Naive thymus-derived CD4-positive, alpha-beta T cell (primary cell): ENCODE measurements at regions of chr12 and their contacts with region 1.

Region 1: GRCh38 chr12:12032851-12033588 is 37.7 kb upstream of the BCL2L14 start:
- DNase-seq: peak; percentile 46 to 79 (median 65)
- ATAC-seq: peak; percentile 82
- H3K4me3 ChIP-seq: peak overlapping the region; percentile 63
- H3K4me3 Mint-ChIP-seq: peak overlapping the region; percentile 75 to 87 (median 82)
- H3K27ac ChIP-seq: no peak overlapping the region
- H3K27ac Mint-ChIP-seq: peak overlapping the region; percentile 18 to 91 (median 72)
- H3K4me1 ChIP-seq: peaks cover 9 to 13% of the 10 kb centered on the region in 2 donors
- H3K4me1 Mint-ChIP-seq: peaks cover 14 to 50% (median 17%) of the 10 kb centered on the region in 7 donors
- H3K27me3 ChIP-seq: no peaks in the 10 kb centered on the region
- H3K27me3 Mint-ChIP-seq: no peaks in the 10 kb centered on the region

Region 2: DNA sequence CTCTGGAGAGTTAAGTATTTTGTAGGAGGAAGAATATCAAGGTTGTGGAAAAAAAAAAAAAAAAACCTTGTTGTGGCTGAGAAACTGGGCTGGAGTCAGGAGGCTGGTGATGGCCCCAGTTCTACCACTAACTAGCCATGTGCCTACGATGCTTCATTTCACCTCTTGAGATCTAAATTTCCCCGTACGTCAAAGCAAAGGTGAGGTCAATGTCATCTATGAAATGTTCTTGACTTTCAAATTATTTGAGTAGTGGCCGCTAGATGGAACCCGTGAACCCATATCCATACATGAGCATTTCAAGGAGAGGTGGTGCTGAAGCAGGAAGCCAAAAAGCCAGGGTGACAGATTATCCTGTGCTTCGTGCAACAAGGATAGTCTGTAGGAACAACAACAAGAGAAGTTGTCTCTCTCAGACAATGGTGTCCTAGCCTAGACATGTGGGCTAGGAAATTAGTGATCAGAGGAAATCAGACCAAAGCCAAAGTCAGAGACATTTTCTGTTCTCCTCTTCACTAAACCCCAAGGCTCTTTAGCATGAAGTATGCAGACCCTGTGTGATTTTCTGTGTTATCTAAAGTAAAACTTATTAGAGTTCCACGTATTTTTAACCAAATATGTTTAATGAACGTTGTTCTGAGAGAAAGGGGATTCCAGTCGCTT is 479.0 kb before region 1 on chr12:
- CTCF ChIA-PET with region 1: interaction called, 6 read pairs
- POLR2A ChIA-PET with region 1: interaction called, 3 read pairs
- intact Hi-C with region 1: loop called (anchors 1 kb)
- DNase-seq: peak in 7 of 9 donors; percentile 41 to 66 (median 58)
- ATAC-seq: peak; percentile 81
- H3K4me3 ChIP-seq: no peak overlapping the region
- H3K4me3 Mint-ChIP-seq: peak overlapping the region in 8 of 10 donors; percentile 12 to 71 (median 36)
- H3K27ac ChIP-seq: no peak overlapping the region
- H3K27ac Mint-ChIP-seq: peak overlapping the region in 8 of 9 donors; percentile 38 to 94 (median 58)
- H3K4me1 ChIP-seq: peaks cover 0 to 15% of the 10 kb centered on the region in 2 donors
- H3K4me1 Mint-ChIP-seq: peaks cover 11 to 47% (median 32%) of the 10 kb centered on the region in 7 donors
- H3K27me3 ChIP-seq: no peaks in the 10 kb centered on the region
- H3K27me3 Mint-ChIP-seq: peaks cover 0 to 26% (median 0%) of the 10 kb centered on the region in 5 donors

Region 3: DNA sequence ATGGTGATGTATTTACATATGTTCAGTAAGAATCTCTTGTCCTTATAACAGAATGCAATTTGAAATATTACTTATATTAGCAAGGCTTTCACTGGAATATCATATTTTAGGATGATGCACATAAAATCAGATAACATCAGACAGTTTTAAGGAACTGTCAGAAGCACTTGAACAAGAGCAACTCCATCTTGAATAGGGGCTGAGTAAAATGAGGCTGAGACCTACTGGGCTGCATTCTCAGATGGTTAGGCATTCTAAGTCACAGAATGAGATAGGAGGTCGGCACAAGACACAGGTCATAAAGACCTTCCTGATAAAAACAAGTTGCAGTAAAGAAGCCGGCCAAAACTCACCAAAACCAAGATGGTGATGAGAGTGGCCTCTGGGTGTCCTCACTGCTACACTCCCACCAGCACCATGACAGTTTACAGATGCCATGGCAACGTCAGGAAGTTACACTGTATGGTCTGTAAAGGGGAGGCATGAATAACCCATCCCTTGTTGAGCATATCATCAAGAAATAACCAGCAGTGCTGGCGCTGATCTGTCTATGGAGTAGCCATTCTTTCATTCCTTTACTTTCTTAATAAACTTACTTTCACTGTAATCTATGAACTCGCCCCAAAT is 411.1 kb before region 1 on chr12:
- CTCF ChIA-PET with region 1: interaction called, 31 read pairs
- POLR2A ChIA-PET with region 1: interaction called, 4 read pairs
- intact Hi-C with region 1: loop called (anchors 1 kb)
- DNase-seq: peak in 6 of 9 donors; percentile 8 to 43 (median 28)
- ATAC-seq: no peak
- H3K4me3 ChIP-seq: no peak overlapping the region
- H3K4me3 Mint-ChIP-seq: no peak overlapping the region
- H3K27ac ChIP-seq: no peak overlapping the region
- H3K27ac Mint-ChIP-seq: peak overlapping the region in 1 of 9 donors; percentile 26
- H3K4me1 ChIP-seq: no peaks in the 10 kb centered on the region
- H3K4me1 Mint-ChIP-seq: peaks cover 0 to 10% (median 0%) of the 10 kb centered on the region in 7 donors
- H3K27me3 ChIP-seq: no peaks in the 10 kb centered on the region
- H3K27me3 Mint-ChIP-seq: no peaks in the 10 kb centered on the region

Region 4: DNA sequence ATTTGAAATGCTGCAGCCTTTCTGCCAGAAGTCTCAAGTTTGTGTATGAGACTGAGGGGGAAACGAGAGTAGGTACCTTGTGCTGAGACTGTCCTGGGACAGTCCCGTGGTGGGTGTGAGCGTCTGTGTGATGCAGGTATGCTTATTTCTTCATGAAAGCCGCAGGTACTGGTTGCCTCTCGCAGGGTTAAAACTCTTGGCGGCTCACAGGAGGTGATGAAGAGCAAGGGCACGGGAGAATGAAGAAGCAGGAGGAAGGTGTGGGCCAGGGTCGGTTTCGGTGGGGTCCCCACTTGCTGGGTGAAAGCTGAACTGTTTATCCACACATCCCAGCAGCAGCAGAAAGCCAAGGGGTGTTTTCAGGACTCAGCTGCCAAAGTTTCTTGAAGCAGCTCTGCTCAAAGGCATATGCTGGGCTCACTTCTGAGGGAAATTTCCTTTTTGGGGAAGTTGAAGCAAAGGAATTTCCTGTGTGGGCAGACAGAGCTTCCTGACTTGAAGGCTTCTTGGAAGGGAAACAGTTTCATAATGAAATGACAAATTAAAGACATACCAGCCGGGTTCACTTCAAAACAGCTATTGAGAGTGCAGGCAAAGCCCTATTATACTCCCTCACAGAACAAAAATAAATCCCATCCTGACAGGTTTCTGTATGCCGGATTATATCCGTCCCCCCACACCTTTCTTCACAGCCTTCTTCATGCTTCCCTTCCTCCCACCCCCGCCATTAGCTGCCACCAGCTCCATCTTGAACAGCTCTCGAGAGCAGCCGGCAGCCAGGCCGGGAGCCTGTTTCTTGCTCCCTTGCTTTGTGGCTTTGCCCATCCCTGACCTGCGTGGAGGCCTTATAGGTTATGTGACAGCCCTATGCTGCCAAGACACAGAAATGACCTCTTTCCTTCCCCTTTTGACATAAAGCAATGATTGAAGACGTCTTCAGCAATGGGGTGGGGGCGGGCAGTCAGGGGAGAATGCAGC is 266.9 kb before region 1 on chr12:
- CTCF ChIA-PET with region 1: interaction called, 3 read pairs
- POLR2A ChIA-PET with region 1: no interaction called
- intact Hi-C with region 1: loop called in 1 of 2 experiments (anchors 5 kb)
- DNase-seq: peak in 4 of 9 donors; percentile 13 to 69 (median 32)
- ATAC-seq: peak; percentile 77
- H3K4me3 ChIP-seq: peak overlapping the region; percentile 12
- H3K4me3 Mint-ChIP-seq: peak overlapping the region; percentile 51 to 93 (median 70)
- H3K27ac ChIP-seq: peak overlapping the region; percentile 36
- H3K27ac Mint-ChIP-seq: peak overlapping the region; percentile 30 to 87 (median 74)
- H3K4me1 ChIP-seq: peaks cover 24 to 33% of the 10 kb centered on the region in 2 donors
- H3K4me1 Mint-ChIP-seq: peaks cover 57 to 96% (median 81%) of the 10 kb centered on the region in 7 donors
- H3K27me3 ChIP-seq: no peaks in the 10 kb centered on the region
- H3K27me3 Mint-ChIP-seq: no peaks in the 10 kb centered on the region

Region 5: DNA sequence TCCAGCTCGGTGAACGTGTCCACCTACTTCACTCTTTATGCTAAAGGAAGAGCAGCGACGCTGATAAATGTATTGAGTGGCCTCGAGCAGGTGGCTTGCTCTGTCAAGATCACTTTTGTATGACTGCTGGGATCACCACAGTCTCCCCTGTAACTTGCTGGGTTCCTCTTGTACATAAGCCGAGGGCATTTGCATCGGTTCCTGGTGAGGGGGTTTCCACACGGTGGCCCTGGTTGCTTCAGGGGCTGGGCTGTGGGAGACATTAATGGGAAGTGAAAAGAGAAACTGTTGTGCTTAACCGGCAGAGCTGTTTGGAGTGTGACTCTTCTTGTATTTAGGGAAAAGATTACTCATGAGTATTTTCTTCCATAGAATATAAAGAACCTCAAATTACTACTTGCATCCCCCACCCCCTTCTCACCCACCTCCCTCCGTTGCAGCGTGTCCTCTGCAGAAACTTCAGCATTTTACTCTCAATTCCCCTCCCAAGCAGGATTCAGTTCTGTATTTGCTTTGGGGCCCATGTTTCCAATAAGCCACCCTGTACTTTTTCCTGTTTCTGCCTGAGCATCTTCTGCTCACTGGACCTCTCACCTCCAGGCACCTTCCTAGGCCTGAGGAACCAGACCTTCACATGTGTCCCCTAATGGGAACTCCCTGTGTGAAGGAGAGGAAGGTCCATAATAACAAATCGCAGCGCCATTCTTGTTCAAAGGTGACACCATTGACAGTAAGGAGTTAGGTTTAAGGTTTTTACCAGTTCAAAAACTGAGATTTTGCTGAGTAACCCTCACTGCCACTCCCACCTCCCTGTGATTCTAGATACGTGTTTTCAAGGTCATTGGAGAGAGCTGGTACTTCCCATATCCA is 196.5 kb before region 1 on chr12:
- CTCF ChIA-PET with region 1: interaction called, 3 read pairs
- POLR2A ChIA-PET with region 1: no interaction called
- intact Hi-C with region 1: loop called in 1 of 2 experiments (anchors 5 kb)
- DNase-seq: peak in 1 of 9 donors; percentile 76
- ATAC-seq: peak; percentile 79
- H3K4me3 ChIP-seq: no peak overlapping the region
- H3K4me3 Mint-ChIP-seq: peak overlapping the region in 1 of 10 donors; percentile 79
- H3K27ac ChIP-seq: no peak overlapping the region
- H3K27ac Mint-ChIP-seq: peak overlapping the region in 3 of 9 donors; percentile 12 to 81 (median 61)
- H3K4me1 ChIP-seq: no peaks in the 10 kb centered on the region
- H3K4me1 Mint-ChIP-seq: peaks cover 8 to 54% (median 27%) of the 10 kb centered on the region in 7 donors
- H3K27me3 ChIP-seq: no peaks in the 10 kb centered on the region
- H3K27me3 Mint-ChIP-seq: no peaks in the 10 kb centered on the region

Region 6: GRCh38 chr12:11901701-11902524 is 131.1 kb before region 1 on chr12:
- CTCF ChIA-PET with region 1: interaction called, 4 read pairs
- POLR2A ChIA-PET with region 1: no interaction called
- intact Hi-C with region 1: loop called in 1 of 2 experiments (anchors 5 kb)
- DNase-seq: peak in 1 of 9 donors; percentile 79
- ATAC-seq: no peak
- H3K4me3 ChIP-seq: no peak overlapping the region
- H3K4me3 Mint-ChIP-seq: peak overlapping the region in 8 of 10 donors; percentile 10 to 71 (median 36)
- H3K27ac ChIP-seq: no peak overlapping the region
- H3K27ac Mint-ChIP-seq: peak overlapping the region in 3 of 9 donors; percentile 29 to 73 (median 71)
- H3K4me1 ChIP-seq: peaks cover 0 to 6% of the 10 kb centered on the region in 2 donors
- H3K4me1 Mint-ChIP-seq: peaks cover 17 to 60% (median 44%) of the 10 kb centered on the region in 7 donors
- H3K27me3 ChIP-seq: no peaks in the 10 kb centered on the region
- H3K27me3 Mint-ChIP-seq: no peaks in the 10 kb centered on the region

Region 7: GRCh38 chr12:11970155-11970520 is 62.9 kb before region 1 on chr12:
- CTCF ChIA-PET with region 1: no interaction called
- POLR2A ChIA-PET with region 1: no interaction called
- intact Hi-C with region 1: no loop called
- DNase-seq: no peak
- ATAC-seq: no peak
- H3K4me3 ChIP-seq: no peak overlapping the region
- H3K4me3 Mint-ChIP-seq: no peak overlapping the region
- H3K27ac ChIP-seq: no peak overlapping the region
- H3K27ac Mint-ChIP-seq: peak overlapping the region in 4 of 9 donors; percentile 0 to 56 (median 26)
- H3K4me1 ChIP-seq: no peaks in the 10 kb centered on the region
- H3K4me1 Mint-ChIP-seq: peaks cover 0 to 24% (median 6%) of the 10 kb centered on the region in 7 donors
- H3K27me3 ChIP-seq: no peaks in the 10 kb centered on the region
- H3K27me3 Mint-ChIP-seq: peaks cover 0 to 2% (median 0%) of the 10 kb centered on the region in 5 donors

Region 8: GRCh38 chr12:11981121-11981733 is 51.8 kb before region 1 on chr12:
- CTCF ChIA-PET with region 1: interaction called, 3 read pairs
- POLR2A ChIA-PET with region 1: no interaction called
- intact Hi-C with region 1: loop called (anchors 1 kb)
- DNase-seq: peak; percentile 12 to 87 (median 75)
- ATAC-seq: peak; percentile 95
- H3K4me3 ChIP-seq: peak overlapping the region; percentile 2
- H3K4me3 Mint-ChIP-seq: peak overlapping the region; percentile 2 to 71 (median 56)
- H3K27ac ChIP-seq: peak overlapping the region; percentile 52
- H3K27ac Mint-ChIP-seq: peak overlapping the region; percentile 66 to 98 (median 82)
- H3K4me1 ChIP-seq: peaks cover 23 to 28% of the 10 kb centered on the region in 2 donors
- H3K4me1 Mint-ChIP-seq: peaks cover 26 to 69% (median 48%) of the 10 kb centered on the region in 7 donors
- H3K27me3 ChIP-seq: no peaks in the 10 kb centered on the region
- H3K27me3 Mint-ChIP-seq: peaks cover 0 to 2% (median 0%) of the 10 kb centered on the region in 5 donors

Region 9: GRCh38 chr12:12126551-12126950 is 93.5 kb after region 1 on chr12:
- CTCF ChIA-PET with region 1: no interaction called
- POLR2A ChIA-PET with region 1: no interaction called
- intact Hi-C with region 1: no loop called
- DNase-seq: no peak
- ATAC-seq: no peak
- H3K4me3 ChIP-seq: no peak overlapping the region
- H3K4me3 Mint-ChIP-seq: no peak overlapping the region
- H3K27ac ChIP-seq: no peak overlapping the region
- H3K27ac Mint-ChIP-seq: no peak overlapping the region
- H3K4me1 ChIP-seq: no peaks in the 10 kb centered on the region
- H3K4me1 Mint-ChIP-seq: peaks cover 0 to 11% (median 4%) of the 10 kb centered on the region in 7 donors
- H3K27me3 ChIP-seq: no peaks in the 10 kb centered on the region
- H3K27me3 Mint-ChIP-seq: peaks cover 0 to 2% (median 0%) of the 10 kb centered on the region in 5 donors